Lower leg skin (tissue), 4 donors: ENCODE measurements at regions of chr2 and their contacts with region 1.

Region 1: GRCh38 chr2:21981127-21981526 is 857.4 kb downstream of the TDRD15 start:
- DNase-seq: no peak
- H3K4me3 ChIP-seq: no peak overlapping the region
- CTCF ChIP-seq: no peak
- POLR2A ChIP-seq: no peak

Region 2: GRCh38 chr2:20584637-20585321 is 1396.3 kb before region 1 on chr2:
- intact Hi-C with region 1: no loop called
- DNase-seq: peak in 1 of 2 donors; percentile 51
- H3K4me3 ChIP-seq: no peak overlapping the region
- CTCF ChIP-seq: no peak
- POLR2A ChIP-seq: no peak

Region 3: DNA sequence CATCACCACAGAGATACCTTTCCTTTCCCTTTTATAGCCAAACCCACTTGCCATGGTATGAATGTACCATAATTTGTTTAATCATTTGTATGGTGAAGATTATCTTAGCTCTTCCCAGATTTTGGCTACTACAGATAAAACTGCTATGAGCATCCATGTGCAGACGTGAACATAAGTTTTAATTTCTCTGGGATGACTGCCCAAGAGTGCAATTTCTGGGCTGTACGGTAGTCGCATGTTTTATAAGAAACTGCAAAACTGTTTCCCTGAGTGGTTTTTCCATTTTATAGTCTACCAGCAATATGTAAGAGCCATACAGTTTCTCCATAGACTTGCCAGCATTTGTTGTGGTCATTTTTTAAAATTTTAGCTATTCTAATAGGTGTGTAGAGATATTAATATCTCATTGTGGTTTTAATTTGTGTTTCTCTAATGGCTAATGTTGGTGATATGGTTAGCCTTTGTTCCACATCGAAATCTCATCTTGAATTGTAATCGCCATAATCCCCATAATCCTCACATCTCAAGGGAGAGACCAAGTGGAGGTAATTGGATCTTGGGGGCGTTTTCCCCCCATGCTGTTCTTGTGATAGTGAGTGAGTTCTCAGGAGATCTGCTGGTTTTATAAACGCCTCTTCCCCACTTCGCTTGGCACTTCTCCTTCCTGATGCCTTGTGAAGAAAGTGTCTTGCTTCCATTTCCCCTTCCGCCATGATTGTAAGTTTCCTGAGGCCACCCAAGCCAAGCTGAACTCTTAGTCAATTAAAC is 775.3 kb after region 1 on chr2:
- intact Hi-C with region 1: loop called (anchors 5 kb)
- DNase-seq: no peak
- H3K4me3 ChIP-seq: no peak overlapping the region
- CTCF ChIP-seq: no peak
- POLR2A ChIP-seq: no peak

Region 4: DNA sequence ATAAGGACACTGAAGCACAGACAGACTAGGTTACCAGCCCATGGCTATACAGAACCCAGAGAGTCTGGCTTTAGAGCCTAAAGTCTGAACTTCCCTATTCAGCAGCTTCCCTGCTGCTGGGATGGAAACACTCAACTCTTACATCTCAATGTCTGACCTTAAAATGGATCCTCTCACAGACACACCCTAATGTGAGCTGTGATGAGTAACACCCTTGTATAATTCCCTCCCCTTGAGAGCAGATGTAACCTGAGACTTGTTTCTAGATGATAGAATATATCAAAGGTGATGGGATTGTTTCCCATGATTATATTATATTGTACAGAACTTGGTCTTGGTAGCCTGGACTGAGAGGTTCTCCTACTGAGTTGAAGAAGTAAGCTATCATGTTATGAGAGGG is 826.7 kb after region 1 on chr2:
- intact Hi-C with region 1: no loop called
- DNase-seq: no peak
- H3K4me3 ChIP-seq: no peak overlapping the region
- CTCF ChIP-seq: no peak
- POLR2A ChIP-seq: no peak